Activated B cell treated with CpG ODN at 0.5 μM for 24 hours (primary cell): ENCODE measurements at regions of chr17 and their contacts with region 1.

Region 1: DNA sequence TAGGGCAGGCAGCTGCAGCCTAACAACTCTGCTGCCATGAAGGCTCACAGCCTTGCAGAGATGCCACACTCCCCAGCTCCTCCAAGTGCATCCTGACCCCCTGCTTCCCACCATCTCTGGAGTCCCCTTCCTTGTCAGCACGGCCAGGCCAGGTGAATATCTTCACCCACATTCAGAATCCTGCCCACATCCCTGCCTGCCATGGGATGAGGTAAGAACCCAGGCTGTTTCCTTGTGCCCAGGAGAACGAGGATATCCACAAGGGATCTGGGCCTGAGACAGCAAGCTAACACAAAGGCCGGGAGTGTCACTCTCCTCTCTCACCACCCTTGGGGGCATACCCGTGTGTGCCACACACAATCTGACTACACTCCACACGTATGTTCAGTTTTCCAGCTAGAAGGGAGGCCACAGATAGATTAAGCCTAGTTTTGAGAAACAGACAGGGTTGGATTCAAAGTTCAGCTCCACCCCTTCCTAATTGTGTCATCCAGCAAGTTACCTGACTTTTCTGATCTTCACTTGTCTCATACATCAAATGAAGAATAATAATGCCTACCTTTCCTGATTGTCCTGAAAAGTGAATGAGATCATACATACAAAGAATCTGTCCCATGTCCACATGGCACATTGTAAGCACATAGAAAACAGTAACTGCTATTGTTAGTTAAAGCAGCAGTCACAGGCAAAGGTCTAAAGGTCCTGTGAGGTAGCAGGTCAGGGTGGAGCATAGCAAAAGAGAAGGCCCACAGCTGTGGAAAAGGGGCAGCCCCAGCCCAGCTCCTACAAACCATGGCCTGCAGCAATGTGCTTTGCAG is 17.4 kb upstream of the SUPT4H1 start:
- DNase-seq: no peak
- ATAC-seq: peak; percentile 66
- H3K4me3 Mint-ChIP-seq: no peak overlapping the region
- H3K27ac Mint-ChIP-seq: peak overlapping the region; percentile 51
- H3K4me1 Mint-ChIP-seq: peaks cover 42% of the 10 kb centered on the region
- H3K27me3 Mint-ChIP-seq: no peaks in the 10 kb centered on the region
- CTCF ChIP-seq: no peak

Region 2: DNA sequence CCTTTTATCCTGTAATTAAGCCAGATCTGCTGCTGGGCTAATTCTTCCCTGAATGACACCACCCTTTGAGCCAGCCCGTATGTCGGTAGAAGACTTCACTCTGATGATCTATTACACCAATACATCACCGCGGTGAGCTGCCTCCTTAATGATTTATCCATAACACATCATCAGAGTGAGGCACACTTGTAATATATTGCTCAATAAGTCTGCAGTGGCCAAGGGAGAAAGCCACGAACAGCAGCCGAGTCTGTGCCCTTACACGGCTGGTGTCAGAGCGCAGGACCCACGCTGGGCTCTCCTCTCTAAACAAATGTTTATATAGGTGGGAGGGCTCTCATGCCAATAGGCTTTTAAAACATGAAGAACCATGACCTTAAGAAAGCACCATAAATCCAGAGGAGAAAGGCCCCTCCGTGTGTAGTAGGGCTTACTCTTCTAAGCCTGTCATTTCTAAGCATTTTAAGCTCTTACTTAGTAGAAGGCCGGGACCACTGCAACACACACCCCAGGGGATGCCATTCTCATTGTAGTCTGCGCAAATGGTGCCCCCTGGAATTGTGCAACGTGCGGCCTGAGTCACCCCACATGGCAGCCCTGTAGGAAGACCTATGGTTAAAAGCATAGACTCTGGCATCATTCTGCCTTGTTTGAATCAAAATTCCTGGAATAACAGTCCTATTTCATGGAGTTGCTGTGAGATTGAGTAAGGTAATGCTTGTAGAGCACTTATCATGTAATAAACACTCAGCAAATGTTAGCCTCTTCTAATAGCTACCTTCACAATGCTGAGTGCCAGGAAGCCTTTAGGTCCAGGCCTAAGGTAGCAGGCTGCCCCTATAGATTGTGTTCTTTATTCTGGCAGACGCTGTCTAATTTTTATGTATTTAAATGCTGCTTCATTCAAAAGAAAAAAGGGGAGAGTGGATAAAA is 545.7 kb before region 1 on chr17:
- CTCF ChIA-PET with region 1: no interaction called
- POLR2A ChIA-PET with region 1: no interaction called
- intact Hi-C with region 1: no loop called
- DNase-seq: no peak
- ATAC-seq: no peak
- H3K4me3 Mint-ChIP-seq: no peak overlapping the region
- H3K27ac Mint-ChIP-seq: no peak overlapping the region
- H3K4me1 Mint-ChIP-seq: no peaks in the 10 kb centered on the region
- H3K27me3 Mint-ChIP-seq: peaks cover 2% of the 10 kb centered on the region
- CTCF ChIP-seq: no peak

Region 3: DNA sequence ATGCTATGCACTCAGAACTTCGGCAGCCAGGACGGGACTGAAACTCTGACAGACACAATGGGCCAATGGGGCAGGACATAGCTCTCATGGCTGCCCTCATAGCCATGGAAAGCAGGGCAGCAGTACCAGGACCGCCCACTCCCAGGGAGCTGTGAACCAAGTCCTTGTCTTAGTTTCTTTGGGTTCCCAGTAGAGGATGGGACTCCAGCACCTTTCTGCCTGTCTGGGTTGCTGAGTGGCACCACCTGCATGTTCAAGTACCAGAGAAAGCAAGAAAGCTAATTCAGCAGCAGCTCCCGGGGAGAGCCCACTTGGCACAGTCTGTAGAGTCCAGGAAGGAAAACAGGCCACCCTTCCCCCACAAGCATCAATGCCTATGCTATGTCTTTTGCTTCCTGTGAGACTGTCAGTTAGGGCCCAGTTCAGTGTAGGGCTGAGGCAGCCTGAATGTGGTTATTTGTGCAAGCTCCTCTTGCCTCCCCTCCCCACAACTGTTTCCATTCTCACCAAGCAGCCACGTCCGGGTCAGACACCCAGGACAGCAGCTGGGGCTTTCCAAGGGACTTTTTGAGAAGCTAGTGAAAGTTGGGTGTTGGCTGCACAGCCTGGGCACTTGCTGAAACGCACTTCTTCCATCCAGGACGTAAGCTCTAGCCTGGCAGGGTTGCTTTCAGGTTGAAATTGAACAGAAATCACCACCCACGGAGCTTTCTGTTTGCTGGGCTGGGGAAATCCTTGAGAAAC is 25.2 kb before region 1 on chr17:
- CTCF ChIA-PET with region 1: no interaction called
- POLR2A ChIA-PET with region 1: interaction called, 21 read pairs
- intact Hi-C with region 1: no loop called
- DNase-seq: peak; percentile 71
- ATAC-seq: peak; percentile 83
- H3K4me3 Mint-ChIP-seq: peak overlapping the region; percentile 83
- H3K27ac Mint-ChIP-seq: peak overlapping the region; percentile 99
- H3K4me1 Mint-ChIP-seq: peaks cover 91% of the 10 kb centered on the region
- H3K27me3 Mint-ChIP-seq: no peaks in the 10 kb centered on the region
- CTCF ChIP-seq: no peak

Region 4: GRCh38 chr17:58352014-58352842 is 17.2 kb before region 1 on chr17 and contains the start of gene SUPT4H1:
- CTCF ChIA-PET with region 1: no interaction called
- POLR2A ChIA-PET with region 1: interaction called, 50 read pairs
- intact Hi-C with region 1: loop called (anchors 2 kb)
- DNase-seq: peak; percentile 91
- ATAC-seq: peak; percentile 92
- H3K4me3 Mint-ChIP-seq: peak within 1 kb of the TSS; percentile 100
- H3K27ac Mint-ChIP-seq: peak within 1 kb of the TSS; percentile 97
- H3K4me1 Mint-ChIP-seq: peaks cover 49% of the 10 kb centered on the region
- H3K27me3 Mint-ChIP-seq: no peaks in the 10 kb centered on the region
- CTCF ChIP-seq: no peak
- total RNA-seq, gene SUPT4H1: 90.2 and 100 TPM in 2 replicates

Region 5: GRCh38 chr17:58382108-58382871 is 12.9 kb after region 1 on chr17:
- CTCF ChIA-PET with region 1: no interaction called
- POLR2A ChIA-PET with region 1: interaction called, 3 read pairs
- intact Hi-C with region 1: loop called (anchors 2 kb)
- DNase-seq: no peak
- ATAC-seq: peak; percentile 45
- H3K4me3 Mint-ChIP-seq: peak overlapping the region; percentile 36
- H3K27ac Mint-ChIP-seq: peak overlapping the region; percentile 60
- H3K4me1 Mint-ChIP-seq: peaks cover 24% of the 10 kb centered on the region
- H3K27me3 Mint-ChIP-seq: no peaks in the 10 kb centered on the region
- CTCF ChIP-seq: no peak